WTC11 (cell line): ENCODE measurements at regions of chr5 and their contacts with region 1.

Region 1: GRCh38 chr5:11148810-11149537 is 387.9 kb upstream of the DAP start:
- DNase-seq: no peak
- ATAC-seq: no peak
- H3K4me3 Mint-ChIP-seq: no peak overlapping the region
- H3K27ac Mint-ChIP-seq: no peak overlapping the region
- H3K4me1 Mint-ChIP-seq: peaks cover 5% of the 10 kb centered on the region; the same call in 1 of the 2 replicates
- H3K27me3 Mint-ChIP-seq: no peaks in the 10 kb centered on the region
- CTCF ChIP-seq: no peak

Region 2: DNA sequence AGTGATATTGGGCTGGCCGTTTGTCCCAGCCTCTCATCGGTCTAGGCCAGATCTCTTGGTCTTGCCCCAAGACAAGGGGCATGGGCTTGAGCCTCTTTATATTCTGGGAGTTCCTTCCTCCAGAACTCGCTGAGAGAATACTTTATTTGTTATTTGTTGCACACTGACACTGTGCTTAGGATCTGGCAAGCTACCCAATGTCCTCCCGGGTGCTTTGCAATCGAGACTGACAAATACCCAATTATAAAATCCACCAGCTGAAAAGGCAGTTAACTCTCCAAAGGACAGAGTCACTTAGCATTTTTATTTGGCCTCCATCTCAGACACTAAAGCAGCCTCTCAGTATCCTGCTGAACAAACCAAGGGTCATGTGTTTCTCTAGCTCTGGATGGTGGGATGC is 112.3 kb after region 1 on chr5:
- CTCF ChIA-PET with region 1: no interaction called
- POLR2A ChIA-PET with region 1: no interaction called
- DNase-seq: no peak
- ATAC-seq: no peak
- H3K4me3 Mint-ChIP-seq: no peak overlapping the region
- H3K27ac Mint-ChIP-seq: no peak overlapping the region
- H3K4me1 Mint-ChIP-seq: peaks cover 1% of the 10 kb centered on the region
- H3K27me3 Mint-ChIP-seq: no peaks in the 10 kb centered on the region
- CTCF ChIP-seq: no peak

Region 3: GRCh38 chr5:11797132-11797531 is 648.2 kb after region 1 on chr5:
- CTCF ChIA-PET with region 1: interaction called, 3 read pairs
- POLR2A ChIA-PET with region 1: interaction called, 12 read pairs
- DNase-seq: peak; percentile 27
- ATAC-seq: peak; percentile 69
- H3K4me3 Mint-ChIP-seq: no peak overlapping the region
- H3K27ac Mint-ChIP-seq: no peak overlapping the region; the same call in 1 of the 2 replicates
- H3K4me1 Mint-ChIP-seq: peaks cover 12% of the 10 kb centered on the region
- H3K27me3 Mint-ChIP-seq: no peaks in the 10 kb centered on the region
- CTCF ChIP-seq: no peak